ENCODE measurements at regions of chr6 and their contacts with region 1.

Region 1: GRCh38 chr6:45001663-45002062 is 326.5 kb upstream of the RUNX2 start:
- DNase-seq: peak in 2 of 9 experiments; percentile 17 to 45
- ATAC-seq: peak; percentile 79
- H3K4me3 ChIP-seq: no peak overlapping the region
- H3K4me3 Mint-ChIP-seq: no peak overlapping the region
- H3K27ac ChIP-seq: peak overlapping the region; percentile 31 to 55
- H3K27ac Mint-ChIP-seq: peak overlapping the region; percentile 53
- H3K4me1 ChIP-seq: peaks cover 32% of the 10 kb centered on the region
- H3K4me1 Mint-ChIP-seq: peaks cover 30% of the 10 kb centered on the region
- H3K27me3 ChIP-seq: no peaks in the 10 kb centered on the region
- H3K27me3 Mint-ChIP-seq: no peaks in the 10 kb centered on the region
- CTCF ChIP-seq: no peak

Region 2: GRCh38 chr6:44805238-44805846 is 196.3 kb before region 1 on chr6:
- CTCF ChIA-PET with region 1: no interaction called
- POLR2A ChIA-PET with region 1: no interaction called
- intact Hi-C with region 1: no loop called
- DNase-seq: no peak
- ATAC-seq: no peak
- H3K4me3 ChIP-seq: no peak overlapping the region
- H3K4me3 Mint-ChIP-seq: no peak overlapping the region
- H3K27ac ChIP-seq: no peak overlapping the region
- H3K27ac Mint-ChIP-seq: peak overlapping the region; percentile 17
- H3K4me1 ChIP-seq: no peaks in the 10 kb centered on the region
- H3K4me1 Mint-ChIP-seq: peaks cover 11% of the 10 kb centered on the region
- H3K27me3 ChIP-seq: no peaks in the 10 kb centered on the region
- H3K27me3 Mint-ChIP-seq: no peaks in the 10 kb centered on the region
- CTCF ChIP-seq: no peak

Region 3: DNA sequence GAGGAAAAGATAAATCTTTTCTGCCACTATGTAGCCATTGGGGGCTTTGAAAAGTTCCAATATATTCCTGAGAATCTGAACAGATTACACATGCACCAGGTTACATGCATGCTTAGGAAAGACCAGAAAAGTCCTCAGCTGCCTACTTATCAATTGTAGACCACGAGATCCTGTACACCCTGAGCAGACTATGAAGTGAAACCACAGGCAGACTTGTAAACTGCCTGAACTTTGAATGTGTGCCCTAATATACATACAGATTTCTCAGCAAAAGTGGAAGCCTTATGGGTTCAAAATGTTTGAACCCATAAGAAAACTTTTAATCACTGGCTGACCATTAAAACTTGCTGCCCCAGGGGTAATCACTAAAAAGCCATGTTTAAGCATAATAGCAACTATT is 52.9 kb after region 1 on chr6:
- CTCF ChIA-PET with region 1: no interaction called
- POLR2A ChIA-PET with region 1: no interaction called
- intact Hi-C with region 1: loop called (anchors 5 kb)
- DNase-seq: peak in 2 of 9 experiments; percentile 4 to 23
- ATAC-seq: no peak
- H3K4me3 ChIP-seq: no peak overlapping the region
- H3K4me3 Mint-ChIP-seq: no peak overlapping the region
- H3K27ac ChIP-seq: no peak overlapping the region
- H3K27ac Mint-ChIP-seq: no peak overlapping the region
- H3K4me1 ChIP-seq: peaks cover 4% of the 10 kb centered on the region
- H3K4me1 Mint-ChIP-seq: peaks cover 38% of the 10 kb centered on the region
- H3K27me3 ChIP-seq: no peaks in the 10 kb centered on the region
- H3K27me3 Mint-ChIP-seq: no peaks in the 10 kb centered on the region
- CTCF ChIP-seq: no peak

Region 4: DNA sequence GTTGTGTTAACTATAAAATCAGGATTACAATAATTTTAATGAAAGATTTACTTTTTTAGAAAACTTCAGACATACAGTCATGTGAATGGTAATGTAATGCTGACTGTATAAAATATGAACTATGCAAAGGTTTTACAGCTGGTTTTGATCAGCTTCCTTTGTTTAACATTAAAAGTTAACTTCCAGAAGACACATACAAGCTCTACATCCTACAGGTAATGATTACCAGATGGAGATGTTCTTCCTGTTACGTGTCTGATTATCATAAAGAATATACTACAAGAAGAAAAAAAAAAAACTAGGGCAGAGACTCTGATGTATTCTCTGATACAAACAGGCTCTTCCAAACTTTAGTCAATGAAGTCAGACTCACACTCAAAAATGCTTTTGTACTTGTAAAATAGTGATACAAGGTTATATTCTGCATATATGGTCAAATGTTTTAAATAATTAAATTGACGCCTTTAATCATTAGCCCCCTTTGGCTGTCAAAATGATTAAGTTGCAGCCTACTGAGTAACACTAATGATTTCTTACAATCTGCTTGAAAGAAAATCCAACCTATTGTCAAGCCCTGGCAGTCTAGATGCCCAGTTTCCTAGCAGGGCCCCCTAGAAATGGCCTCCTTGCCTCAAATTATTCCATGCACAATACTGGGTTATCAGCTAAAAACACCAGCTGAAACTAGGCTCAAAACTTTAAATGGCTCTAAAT is 74.7 kb after region 1 on chr6:
- CTCF ChIA-PET with region 1: no interaction called
- POLR2A ChIA-PET with region 1: no interaction called
- intact Hi-C with region 1: no loop called
- DNase-seq: no peak
- ATAC-seq: no peak
- H3K4me3 ChIP-seq: no peak overlapping the region
- H3K4me3 Mint-ChIP-seq: no peak overlapping the region
- H3K27ac ChIP-seq: no peak overlapping the region
- H3K27ac Mint-ChIP-seq: no peak overlapping the region
- H3K4me1 ChIP-seq: peaks cover 18% of the 10 kb centered on the region
- H3K4me1 Mint-ChIP-seq: peaks cover 24% of the 10 kb centered on the region
- H3K27me3 ChIP-seq: no peaks in the 10 kb centered on the region
- H3K27me3 Mint-ChIP-seq: no peaks in the 10 kb centered on the region
- CTCF ChIP-seq: no peak

Measured in CD8-positive, alpha-beta T cell (primary cell).